ENCODE measurements at regions of chr10 and their contacts with region 1.

Region 1: DNA sequence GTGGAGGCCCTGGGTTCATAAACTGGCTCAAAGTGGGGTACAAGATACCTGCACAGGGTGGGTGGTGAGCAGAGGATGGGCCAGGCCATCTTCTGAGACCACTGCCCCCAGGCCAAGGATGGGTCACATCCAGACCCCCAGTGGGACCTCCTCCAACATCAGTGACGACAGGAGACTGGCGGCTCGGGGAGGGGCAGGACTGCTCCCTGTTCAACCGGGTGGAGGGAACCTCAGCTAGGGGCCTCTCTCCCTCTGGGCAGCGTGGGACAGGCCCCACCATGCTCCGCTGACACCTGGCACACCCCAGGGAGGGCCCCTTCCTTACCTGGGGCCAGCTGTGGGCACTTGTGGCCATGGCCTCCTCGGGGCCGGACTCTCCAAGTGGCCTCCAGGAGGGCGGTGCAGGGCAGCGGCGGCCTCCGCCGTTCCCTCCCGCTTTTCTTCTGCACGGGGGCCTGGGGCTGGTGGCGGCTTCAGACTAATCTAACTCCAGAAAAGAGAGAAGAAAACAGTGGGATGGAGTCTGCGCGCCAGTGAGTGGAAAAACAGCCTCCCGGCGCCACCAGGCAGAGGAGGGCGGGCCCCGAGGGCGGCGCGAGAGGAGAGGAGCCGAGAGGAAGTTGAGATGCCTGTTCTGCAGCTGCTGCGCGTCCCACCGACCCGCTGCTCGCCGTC is at the start of gene CALHM2:
- DNase-seq: peak; percentile 75
- ATAC-seq: peak; percentile 78
- H3K4me3 Mint-ChIP-seq: peak within 1 kb of the TSS; percentile 96
- H3K27ac Mint-ChIP-seq: peak within 1 kb of the TSS; percentile 89
- H3K4me1 Mint-ChIP-seq: peaks cover 49% of the 10 kb centered on the region
- H3K27me3 Mint-ChIP-seq: no peaks in the 10 kb centered on the region
- total RNA-seq, gene CALHM2: 117 to 124 TPM

Region 2: DNA sequence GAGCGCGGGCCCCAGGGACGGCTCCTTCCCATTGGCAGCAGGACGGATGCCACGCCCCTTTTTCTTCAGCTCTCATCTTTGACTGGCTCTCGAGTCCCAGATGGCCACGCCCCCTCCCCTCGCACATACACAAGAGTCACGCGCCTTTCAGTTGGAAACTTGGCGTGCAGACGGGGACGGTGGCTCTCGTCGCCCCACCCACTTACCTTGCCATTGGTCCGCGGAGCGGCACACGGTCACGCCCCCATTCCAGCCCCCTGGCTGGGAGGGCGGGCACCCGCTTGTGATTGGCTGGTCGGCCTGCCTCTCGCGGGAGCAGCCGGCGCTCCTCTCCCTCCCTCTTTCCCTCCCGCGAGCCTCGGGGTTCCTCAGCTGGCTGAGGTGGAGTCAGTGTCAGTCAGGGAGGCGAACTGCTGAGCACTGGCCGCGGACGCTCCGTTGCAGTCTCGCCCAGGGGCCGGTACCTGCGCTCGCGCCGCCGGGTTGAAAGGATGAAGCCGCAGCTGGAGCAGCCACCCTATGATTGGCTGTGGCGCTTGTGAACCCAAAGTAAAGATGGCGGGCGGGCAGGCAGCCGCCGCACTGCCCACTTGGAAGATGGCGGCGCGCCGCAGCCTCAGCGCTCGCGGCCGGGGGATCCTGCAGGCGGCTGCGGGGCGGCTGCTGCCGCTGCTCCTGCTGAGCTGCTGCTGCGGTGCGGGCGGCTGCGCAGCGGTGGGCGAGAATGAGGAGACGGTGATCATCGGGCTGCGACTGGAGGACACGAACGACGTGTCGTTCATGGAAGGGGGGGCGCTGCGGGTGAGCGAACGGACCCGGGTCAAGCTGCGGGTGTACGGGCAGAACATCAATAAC is 533.8 kb before region 1 on chr10 and contains the start of gene CNNM2:
- POLR2A ChIA-PET with region 1: no interaction called
- DNase-seq: peak; percentile 98
- ATAC-seq: peak; percentile 87
- H3K4me3 Mint-ChIP-seq: peak within 1 kb of the TSS; percentile 92
- H3K27ac Mint-ChIP-seq: peak within 1 kb of the TSS; percentile 93
- H3K4me1 Mint-ChIP-seq: peaks cover 53% of the 10 kb centered on the region
- H3K27me3 Mint-ChIP-seq: peaks cover 2% of the 10 kb centered on the region
- total RNA-seq, gene CNNM2: 10.9 to 12.3 TPM

Region 3: DNA sequence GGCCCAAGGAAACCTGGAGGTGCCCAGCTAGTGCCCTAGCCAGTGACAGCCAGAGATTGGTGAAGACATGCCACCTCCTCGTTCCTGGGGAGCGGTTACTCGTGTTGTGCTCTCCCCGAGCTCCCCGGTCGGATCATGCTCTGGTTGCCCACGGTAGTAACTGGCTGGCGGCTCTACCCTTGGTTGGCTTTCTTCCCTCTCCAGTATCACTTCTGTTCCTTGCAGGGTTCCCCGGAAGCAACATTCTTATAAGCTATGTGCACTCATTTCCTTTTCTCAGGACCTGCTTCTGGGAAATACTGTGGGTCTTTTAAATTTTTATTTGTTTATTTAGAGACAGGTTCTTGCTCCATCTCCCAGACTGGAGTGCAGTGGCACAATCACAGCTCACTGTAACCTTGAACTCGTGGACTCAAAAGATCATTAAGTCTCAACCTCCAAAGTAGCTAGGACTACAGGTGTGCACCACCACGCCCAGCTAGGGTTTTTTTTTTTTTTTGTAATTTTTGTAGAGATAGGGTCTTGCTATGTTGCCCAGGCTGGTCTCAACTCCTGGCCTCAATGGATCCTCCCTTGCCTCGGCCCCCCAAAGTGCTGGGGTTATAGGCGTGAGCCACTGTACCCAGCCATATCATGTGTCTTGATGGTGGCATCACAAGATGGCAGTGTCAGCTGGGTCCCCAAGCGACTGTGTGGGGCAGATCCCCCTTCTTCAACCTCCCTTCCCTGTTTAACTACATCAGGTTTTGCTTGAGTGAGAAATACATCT is 13.6 kb after region 1 on chr10:
- POLR2A ChIA-PET with region 1: interaction called, 89 read pairs
- DNase-seq: no peak
- ATAC-seq: no peak
- H3K4me3 Mint-ChIP-seq: no peak overlapping the region
- H3K27ac Mint-ChIP-seq: no peak overlapping the region
- H3K4me1 Mint-ChIP-seq: peaks cover 38% of the 10 kb centered on the region
- H3K27me3 Mint-ChIP-seq: peaks cover 7% of the 10 kb centered on the region

Region 4: GRCh38 chr10:103476046-103476995 is 24.4 kb after region 1 on chr10:
- POLR2A ChIA-PET with region 1: interaction called, 89 read pairs
- DNase-seq: peak; percentile 58
- ATAC-seq: peak; percentile 44
- H3K4me3 Mint-ChIP-seq: no peak overlapping the region
- H3K27ac Mint-ChIP-seq: peak overlapping the region; percentile 81
- H3K4me1 Mint-ChIP-seq: peaks cover 38% of the 10 kb centered on the region
- H3K27me3 Mint-ChIP-seq: no peaks in the 10 kb centered on the region